HCT116 (cell line): ENCODE measurements at regions of chr14 and their contacts with region 1.

Region 1: GRCh38 chr14:104865644-104866441 is 775 bp downstream of the CEP170B start:
- DNase-seq: peak; percentile 8
- ATAC-seq: peak; percentile 63
- H3K4me3 ChIP-seq: peak overlapping the region; percentile 80 to 94
- H3K27ac ChIP-seq: peak overlapping the region; percentile 90
- H3K4me1 ChIP-seq: peaks cover 14 to 23% of the 10 kb centered on the region in 2 experiments
- H3K27me3 ChIP-seq: no peaks in the 10 kb centered on the region
- CTCF ChIP-seq: no peak
- POLR2A ChIP-seq: no peak
- RAD21 ChIP-seq: no peak

Region 2: GRCh38 chr14:104545151-104545941 is 320.5 kb before region 1 on chr14:
- CTCF ChIA-PET with region 1: no interaction called
- POLR2A ChIA-PET with region 1: no interaction called
- RAD21 ChIA-PET with region 1: no interaction called
- intact Hi-C with region 1: no loop called
- DNase-seq: no peak
- ATAC-seq: no peak
- H3K4me3 ChIP-seq: no peak overlapping the region
- H3K27ac ChIP-seq: no peak overlapping the region
- H3K4me1 ChIP-seq: no peaks in the 10 kb centered on the region
- H3K27me3 ChIP-seq: peaks cover 47% of the 10 kb centered on the region
- CTCF ChIP-seq: no peak
- POLR2A ChIP-seq: no peak
- RAD21 ChIP-seq: no peak

Region 3: GRCh38 chr14:104826189-104826860 is 39.5 kb before region 1 on chr14:
- CTCF ChIA-PET with region 1: no interaction called
- POLR2A ChIA-PET with region 1: no interaction called
- RAD21 ChIA-PET with region 1: interaction called in 1 of 2 experiments, 3 read pairs
- intact Hi-C with region 1: loop called (anchors 2 kb)
- DNase-seq: peak; percentile 47
- ATAC-seq: peak; percentile 81
- H3K4me3 ChIP-seq: peak overlapping the region; percentile 45 to 62
- H3K27ac ChIP-seq: peak overlapping the region; percentile 42; the same call in 1 of the 2 replicates
- H3K4me1 ChIP-seq: peaks cover 16 to 22% of the 10 kb centered on the region in 2 experiments
- H3K27me3 ChIP-seq: no peaks in the 10 kb centered on the region
- CTCF ChIP-seq: peak; percentile 57 to 73 (median 66)
- POLR2A ChIP-seq: no peak
- RAD21 ChIP-seq: peak; percentile 79